ENCODE measurements at regions of chr5 and their contacts with region 1.

Region 1: DNA sequence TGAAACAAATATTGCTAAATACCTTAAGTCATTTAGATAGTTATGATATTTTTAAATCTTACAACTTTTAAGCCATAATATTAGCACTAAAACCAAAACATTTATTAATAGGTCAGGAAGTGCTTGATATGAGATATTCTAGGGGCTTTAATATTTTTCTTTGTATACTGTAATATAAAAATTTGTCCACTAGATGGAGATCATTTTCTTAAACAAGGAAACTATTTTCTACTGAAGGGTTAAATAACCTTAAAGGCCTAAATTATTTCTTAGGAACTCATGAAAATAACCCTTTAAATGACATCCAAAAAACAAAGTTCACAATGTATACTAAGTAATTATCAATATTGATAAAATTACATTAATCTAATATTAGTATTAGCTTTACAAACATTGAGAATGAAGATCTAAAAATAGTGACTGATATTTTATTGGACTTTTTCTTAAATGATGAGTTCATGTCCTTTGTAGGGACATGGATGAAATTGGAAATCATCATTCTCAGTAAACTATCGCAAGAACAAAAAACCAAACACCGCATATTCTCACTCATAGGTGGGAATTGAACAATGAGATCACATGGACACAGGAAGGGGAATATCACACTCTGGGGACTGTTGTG is 635.7 kb downstream of the RAB3C start:
- DNase-seq: no peak
- H3K4me3 Mint-ChIP-seq: no peak overlapping the region
- H3K27ac Mint-ChIP-seq: no peak overlapping the region
- H3K4me1 Mint-ChIP-seq: peaks cover 7% of the 10 kb centered on the region
- H3K27me3 Mint-ChIP-seq: no peaks in the 10 kb centered on the region
- CTCF ChIP-seq: no peak

Region 2: GRCh38 chr5:59348186-59348585 is 129.7 kb after region 1 on chr5:
- CTCF ChIA-PET with region 1: interaction called, 3 read pairs
- intact Hi-C with region 1: loop called (anchors 5 kb)
- DNase-seq: peak; percentile 19
- H3K4me3 Mint-ChIP-seq: no peak overlapping the region
- H3K27ac Mint-ChIP-seq: no peak overlapping the region
- H3K4me1 Mint-ChIP-seq: no peaks in the 10 kb centered on the region
- H3K27me3 Mint-ChIP-seq: no peaks in the 10 kb centered on the region
- CTCF ChIP-seq: no peak

Region 3: GRCh38 chr5:59367791-59368394 is 149.4 kb after region 1 on chr5:
- CTCF ChIA-PET with region 1: interaction called, 7 read pairs
- intact Hi-C with region 1: loop called (anchors 1 kb)
- DNase-seq: peak; percentile 49
- H3K4me3 Mint-ChIP-seq: no peak overlapping the region
- H3K27ac Mint-ChIP-seq: no peak overlapping the region
- H3K4me1 Mint-ChIP-seq: no peaks in the 10 kb centered on the region
- H3K27me3 Mint-ChIP-seq: no peaks in the 10 kb centered on the region
- CTCF ChIP-seq: peak; percentile 84

Region 4: GRCh38 chr5:59449905-59450644 is 231.5 kb after region 1 on chr5:
- CTCF ChIA-PET with region 1: interaction called, 14 read pairs
- intact Hi-C with region 1: no loop called
- DNase-seq: peak; percentile 3
- H3K4me3 Mint-ChIP-seq: no peak overlapping the region
- H3K27ac Mint-ChIP-seq: no peak overlapping the region
- H3K4me1 Mint-ChIP-seq: no peaks in the 10 kb centered on the region
- H3K27me3 Mint-ChIP-seq: no peaks in the 10 kb centered on the region
- CTCF ChIP-seq: peak; percentile 33

Measured in Calu3 (cell line).